Pancreas (tissue), 10 donors: ENCODE measurements at regions of chr3 and their contacts with region 1.

Region 1: GRCh38 chr3:46943237-46944187 is 33.0 kb downstream of the CCDC12 start:
- DNase-seq: peak in 5 of 6 donors; percentile 71 to 84 (median 75)
- ATAC-seq: peak; percentile 39 to 72 (median 68)
- H3K4me3 ChIP-seq: peak overlapping the region in 2 of 4 donors; percentile 11 to 25
- H3K27ac ChIP-seq: peak overlapping the region; percentile 91 to 97 (median 92)
- H3K4me1 ChIP-seq: peaks cover 77 to 85% (median 78%) of the 10 kb centered on the region in 3 donors
- H3K27me3 ChIP-seq: no peaks in the 10 kb centered on the region
- CTCF ChIP-seq: no peak

Region 2: DNA sequence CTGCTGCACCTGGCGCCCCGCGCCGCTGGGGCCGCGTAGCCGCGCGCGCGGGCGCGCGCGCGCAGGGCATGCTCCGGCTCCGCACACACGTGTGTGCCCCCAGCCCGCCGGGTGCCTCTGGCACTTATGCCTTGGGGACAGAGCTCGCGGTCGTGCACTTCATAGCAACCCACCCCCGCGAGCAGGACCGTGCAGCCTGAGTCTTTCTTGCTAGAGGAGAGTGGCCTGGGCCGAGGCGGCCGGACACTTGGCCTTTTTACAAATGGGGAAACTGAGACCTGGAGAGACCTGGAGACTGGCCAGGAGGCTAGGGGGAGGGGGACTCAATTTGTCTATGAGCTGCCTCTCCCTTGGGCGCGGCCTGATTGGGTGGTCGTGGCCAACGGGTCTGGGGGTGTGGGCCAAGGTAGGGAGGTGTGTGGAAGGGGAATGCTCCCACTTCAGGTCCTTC is 36.5 kb after region 1 on chr3:
- intact Hi-C with region 1: loop called in 1 of 3 experiments (anchors 5 kb)
- DNase-seq: peak; percentile 53 to 84 (median 66)
- ATAC-seq: no peak
- H3K4me3 ChIP-seq: peak overlapping the region; percentile 51 to 65 (median 59)
- H3K27ac ChIP-seq: peak overlapping the region; percentile 73 to 92 (median 79)
- H3K4me1 ChIP-seq: peaks cover 4 to 24% (median 5%) of the 10 kb centered on the region in 3 donors
- H3K27me3 ChIP-seq: no peaks in the 10 kb centered on the region
- CTCF ChIP-seq: no peak